Naive thymus-derived CD4-positive, alpha-beta T cell (primary cell): ENCODE measurements at regions of chr11 and their contacts with region 1.

Region 1: GRCh38 chr11:73376160-73376802 is at the start of gene RELT:
- DNase-seq: peak; percentile 84 to 99 (median 96)
- ATAC-seq: peak; percentile 93
- H3K4me3 ChIP-seq: peak within 1 kb of the TSS; percentile 84
- H3K4me3 Mint-ChIP-seq: peak within 1 kb of the TSS; percentile 86 to 99 (median 92)
- H3K27ac ChIP-seq: peak within 1 kb of the TSS; percentile 92
- H3K27ac Mint-ChIP-seq: peak within 1 kb of the TSS; percentile 87 to 99 (median 95)
- H3K4me1 ChIP-seq: peaks cover 12 to 22% of the 10 kb centered on the region in 2 donors
- H3K4me1 Mint-ChIP-seq: peaks cover 32 to 49% (median 41%) of the 10 kb centered on the region in 7 donors
- H3K27me3 ChIP-seq: no peaks in the 10 kb centered on the region
- H3K27me3 Mint-ChIP-seq: no peaks in the 10 kb centered on the region
- total RNA-seq, gene RELT: 11.9 to 275 (median 28.4) TPM

Region 2: DNA sequence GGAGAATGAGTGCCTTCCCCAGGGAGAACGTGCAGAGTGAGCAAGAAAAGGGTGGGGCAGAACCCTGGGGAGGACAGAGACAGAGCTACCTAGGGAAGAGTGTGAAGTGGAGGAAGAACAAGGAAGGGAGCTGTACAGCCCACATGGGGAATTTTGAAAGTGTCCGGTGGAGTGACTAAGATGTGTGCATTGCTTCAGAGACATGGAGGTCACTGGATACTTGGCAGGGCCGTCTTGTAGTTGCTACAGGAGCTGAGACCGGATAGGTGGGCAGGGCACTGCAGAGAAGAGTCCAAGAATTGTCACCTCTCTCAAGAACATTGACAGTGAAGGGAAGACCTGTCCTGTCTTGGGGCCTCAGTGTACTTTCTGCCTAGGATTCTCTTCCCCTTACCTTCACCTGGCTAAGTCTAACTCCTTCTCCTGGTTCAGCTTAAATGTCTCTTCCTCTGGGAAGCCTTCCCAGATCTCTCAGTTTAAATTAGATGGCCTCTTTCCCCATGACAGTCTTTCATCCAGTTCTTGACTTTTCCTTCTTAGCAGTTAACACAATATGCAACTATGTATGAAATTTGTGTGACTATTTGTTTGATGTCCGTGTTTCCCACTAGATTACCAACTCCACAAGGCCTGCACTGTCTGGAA is 113.3 kb before region 1 on chr11:
- CTCF ChIA-PET with region 1: no interaction called
- POLR2A ChIA-PET with region 1: no interaction called
- intact Hi-C with region 1: no loop called
- DNase-seq: no peak
- ATAC-seq: no peak
- H3K4me3 ChIP-seq: no peak overlapping the region
- H3K4me3 Mint-ChIP-seq: no peak overlapping the region
- H3K27ac ChIP-seq: no peak overlapping the region
- H3K27ac Mint-ChIP-seq: no peak overlapping the region
- H3K4me1 ChIP-seq: no peaks in the 10 kb centered on the region
- H3K4me1 Mint-ChIP-seq: no peaks in the 10 kb centered on the region
- H3K27me3 ChIP-seq: no peaks in the 10 kb centered on the region
- H3K27me3 Mint-ChIP-seq: peaks cover 22 to 59% (median 33%) of the 10 kb centered on the region in 5 donors

Region 3: GRCh38 chr11:73307323-73308002 is 68.8 kb before region 1 on chr11:
- CTCF ChIA-PET with region 1: no interaction called
- POLR2A ChIA-PET with region 1: no interaction called
- intact Hi-C with region 1: loop called in 1 of 2 experiments (anchors 5 kb)
- DNase-seq: peak; percentile 75 to 90 (median 86)
- ATAC-seq: peak; percentile 83
- H3K4me3 ChIP-seq: peak overlapping the region; percentile 63
- H3K4me3 Mint-ChIP-seq: peak overlapping the region; percentile 83 to 95 (median 91)
- H3K27ac ChIP-seq: no peak overlapping the region
- H3K27ac Mint-ChIP-seq: peak overlapping the region in 5 of 9 donors; percentile 9 to 68 (median 31)
- H3K4me1 ChIP-seq: peaks cover 4 to 5% of the 10 kb centered on the region in 2 donors
- H3K4me1 Mint-ChIP-seq: peaks cover 8 to 13% (median 11%) of the 10 kb centered on the region in 7 donors
- H3K27me3 ChIP-seq: peaks cover 0 to 4% of the 10 kb centered on the region in 2 donors
- H3K27me3 Mint-ChIP-seq: peaks cover 14 to 55% (median 21%) of the 10 kb centered on the region in 5 donors

Region 4: GRCh38 chr11:73360336-73361013 is 15.8 kb before region 1 on chr11:
- CTCF ChIA-PET with region 1: interaction called, 5 read pairs
- POLR2A ChIA-PET with region 1: interaction called, 6 read pairs
- intact Hi-C with region 1: loop called in 1 of 2 experiments (anchors 2 kb)
- DNase-seq: peak in 5 of 9 donors; percentile 24 to 35 (median 31)
- ATAC-seq: peak; percentile 56
- H3K4me3 ChIP-seq: no peak overlapping the region
- H3K4me3 Mint-ChIP-seq: no peak overlapping the region
- H3K27ac ChIP-seq: no peak overlapping the region
- H3K27ac Mint-ChIP-seq: peak overlapping the region in 6 of 9 donors; percentile 6 to 72 (median 31)
- H3K4me1 ChIP-seq: peaks cover 2 to 6% of the 10 kb centered on the region in 2 donors
- H3K4me1 Mint-ChIP-seq: peaks cover 0 to 4% (median 0%) of the 10 kb centered on the region in 7 donors
- H3K27me3 ChIP-seq: no peaks in the 10 kb centered on the region
- H3K27me3 Mint-ChIP-seq: no peaks in the 10 kb centered on the region

Region 5: DNA sequence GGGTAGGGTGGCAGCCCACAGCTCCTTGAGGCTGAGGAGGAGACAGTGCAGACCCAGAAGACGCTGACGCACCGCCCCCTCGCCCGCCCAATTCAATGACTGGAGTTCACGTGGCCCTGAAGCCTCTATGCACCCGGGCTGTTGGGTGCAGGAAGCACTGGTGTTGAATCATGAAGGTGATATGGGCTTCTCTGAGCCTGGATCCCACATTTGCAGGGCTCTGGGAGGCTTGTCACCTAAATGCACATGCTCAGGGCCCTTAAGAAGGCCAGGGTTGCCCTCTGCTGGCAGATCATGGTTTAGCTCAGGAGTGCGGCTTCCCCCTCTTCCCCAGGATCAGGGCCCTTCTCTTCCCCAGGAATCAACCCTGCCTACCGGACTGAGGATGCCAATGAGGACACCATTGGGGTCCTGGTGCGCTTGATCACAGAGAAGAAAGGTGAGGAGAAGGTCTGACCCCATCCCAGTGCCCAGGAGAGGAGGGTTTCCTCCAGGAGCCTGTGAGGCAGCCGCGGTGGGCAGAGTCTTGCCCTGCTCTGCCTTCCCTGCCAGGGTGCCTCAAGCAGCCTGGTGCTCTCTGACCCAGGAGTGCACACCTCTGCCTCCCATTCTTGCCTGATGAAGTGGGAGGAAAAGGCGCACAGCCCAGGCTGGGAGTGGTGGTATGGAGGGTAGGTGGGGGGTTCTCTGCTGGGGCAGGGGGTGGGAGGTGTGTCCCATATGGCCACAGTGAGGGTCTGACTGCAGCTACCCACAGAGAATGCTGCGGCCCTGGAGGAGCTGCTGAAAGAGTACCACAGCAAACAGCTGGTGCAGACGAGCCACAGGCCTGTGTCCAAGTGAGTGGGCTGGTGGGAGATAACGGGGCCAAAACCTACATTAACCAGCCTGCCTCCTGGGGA is 17.4 kb after region 1 on chr11:
- CTCF ChIA-PET with region 1: interaction called, 4 read pairs
- POLR2A ChIA-PET with region 1: interaction called, 4 read pairs
- intact Hi-C with region 1: loop called (anchors 1 to 2 kb)
- DNase-seq: peak; percentile 43 to 74 (median 62)
- ATAC-seq: peak; percentile 69
- H3K4me3 ChIP-seq: no peak overlapping the region
- H3K4me3 Mint-ChIP-seq: peak overlapping the region in 1 of 10 donors; percentile 9
- H3K27ac ChIP-seq: no peak overlapping the region
- H3K27ac Mint-ChIP-seq: peak overlapping the region in 7 of 9 donors; percentile 14 to 75 (median 56)
- H3K4me1 ChIP-seq: no peaks in the 10 kb centered on the region
- H3K4me1 Mint-ChIP-seq: peaks cover 0 to 21% (median 5%) of the 10 kb centered on the region in 7 donors
- H3K27me3 ChIP-seq: no peaks in the 10 kb centered on the region
- H3K27me3 Mint-ChIP-seq: no peaks in the 10 kb centered on the region

Region 6: DNA sequence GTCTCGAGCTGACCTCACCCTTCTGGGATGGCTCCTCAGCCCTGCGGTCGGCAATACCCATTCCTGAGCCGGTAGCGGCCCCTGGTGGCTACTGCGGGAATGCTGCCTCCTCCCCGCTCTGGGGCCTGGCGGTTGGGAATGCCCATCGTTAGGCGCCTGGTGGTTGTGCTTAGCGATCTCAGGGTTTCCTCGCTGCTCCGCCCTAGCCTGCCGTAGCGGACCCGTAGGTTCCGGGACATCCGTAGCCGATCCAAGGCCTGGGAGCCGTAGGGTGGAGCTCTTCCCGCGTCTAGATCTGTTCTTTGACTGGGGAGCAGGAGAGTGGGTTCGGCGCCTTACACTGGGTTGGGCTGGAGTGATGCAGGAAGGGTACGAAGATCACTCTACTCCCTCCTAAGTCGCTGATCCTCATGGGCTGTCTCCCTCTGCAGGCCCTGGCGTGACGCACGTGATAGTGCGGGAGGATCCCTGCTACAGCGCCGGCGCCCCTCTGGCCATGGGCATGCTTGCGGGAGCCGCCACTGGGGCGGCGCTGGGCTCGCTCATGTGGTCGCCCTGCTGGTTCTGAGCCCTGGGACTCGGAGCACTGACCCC is 284.9 kb after region 1 on chr11:
- CTCF ChIA-PET with region 1: no interaction called
- POLR2A ChIA-PET with region 1: no interaction called
- intact Hi-C with region 1: loop called in 1 of 2 experiments (anchors 1 kb)
- DNase-seq: peak; percentile 67 to 91 (median 80)
- ATAC-seq: peak; percentile 97
- H3K4me3 ChIP-seq: no peak overlapping the region
- H3K4me3 Mint-ChIP-seq: peak overlapping the region in 5 of 10 donors; percentile 29 to 58 (median 36)
- H3K27ac ChIP-seq: no peak overlapping the region
- H3K27ac Mint-ChIP-seq: peak overlapping the region in 4 of 9 donors; percentile 14 to 41 (median 34)
- H3K4me1 ChIP-seq: peaks cover 5 to 15% of the 10 kb centered on the region in 2 donors
- H3K4me1 Mint-ChIP-seq: peaks cover 13 to 32% (median 23%) of the 10 kb centered on the region in 7 donors
- H3K27me3 ChIP-seq: no peaks in the 10 kb centered on the region
- H3K27me3 Mint-ChIP-seq: no peaks in the 10 kb centered on the region

Region 7: GRCh38 chr11:74492974-74493790 is 1116.9 kb after region 1 on chr11 and contains the start of gene LIPT2:
- CTCF ChIA-PET with region 1: no interaction called
- POLR2A ChIA-PET with region 1: no interaction called
- intact Hi-C with region 1: loop called in 1 of 2 experiments (anchors 5 kb)
- DNase-seq: peak; percentile 92 to 98 (median 96)
- ATAC-seq: peak; percentile 97
- H3K4me3 ChIP-seq: peak within 1 kb of the TSS; percentile 90
- H3K4me3 Mint-ChIP-seq: peak within 1 kb of the TSS; percentile 74 to 92 (median 86)
- H3K27ac ChIP-seq: peak within 1 kb of the TSS; percentile 95
- H3K27ac Mint-ChIP-seq: peak within 1 kb of the TSS; percentile 73 to 96 (median 89)
- H3K4me1 ChIP-seq: peaks cover 8 to 10% of the 10 kb centered on the region in 2 donors
- H3K4me1 Mint-ChIP-seq: peaks cover 14 to 43% (median 28%) of the 10 kb centered on the region in 7 donors
- H3K27me3 ChIP-seq: no peaks in the 10 kb centered on the region
- H3K27me3 Mint-ChIP-seq: no peaks in the 10 kb centered on the region
- total RNA-seq, gene LIPT2: 1.9 to 18.2 (median 9.3) TPM